Activated T-helper 1 cell treated with anti-CD3 and anti-CD28 coated beads, Interleukin-12 subunit alpha, Interleukin-12 subunit beta, Interleukin-2, Interleukin-4 antibody, amounts not matched to agents 30 ng/mL and 10 ng/mL and 1 ng/mL, durations not matched to agents 14 hours and 24 hours and 36 hours (primary cell): ENCODE measurements at regions of chr16 and their contacts with region 1.

Region 1: DNA sequence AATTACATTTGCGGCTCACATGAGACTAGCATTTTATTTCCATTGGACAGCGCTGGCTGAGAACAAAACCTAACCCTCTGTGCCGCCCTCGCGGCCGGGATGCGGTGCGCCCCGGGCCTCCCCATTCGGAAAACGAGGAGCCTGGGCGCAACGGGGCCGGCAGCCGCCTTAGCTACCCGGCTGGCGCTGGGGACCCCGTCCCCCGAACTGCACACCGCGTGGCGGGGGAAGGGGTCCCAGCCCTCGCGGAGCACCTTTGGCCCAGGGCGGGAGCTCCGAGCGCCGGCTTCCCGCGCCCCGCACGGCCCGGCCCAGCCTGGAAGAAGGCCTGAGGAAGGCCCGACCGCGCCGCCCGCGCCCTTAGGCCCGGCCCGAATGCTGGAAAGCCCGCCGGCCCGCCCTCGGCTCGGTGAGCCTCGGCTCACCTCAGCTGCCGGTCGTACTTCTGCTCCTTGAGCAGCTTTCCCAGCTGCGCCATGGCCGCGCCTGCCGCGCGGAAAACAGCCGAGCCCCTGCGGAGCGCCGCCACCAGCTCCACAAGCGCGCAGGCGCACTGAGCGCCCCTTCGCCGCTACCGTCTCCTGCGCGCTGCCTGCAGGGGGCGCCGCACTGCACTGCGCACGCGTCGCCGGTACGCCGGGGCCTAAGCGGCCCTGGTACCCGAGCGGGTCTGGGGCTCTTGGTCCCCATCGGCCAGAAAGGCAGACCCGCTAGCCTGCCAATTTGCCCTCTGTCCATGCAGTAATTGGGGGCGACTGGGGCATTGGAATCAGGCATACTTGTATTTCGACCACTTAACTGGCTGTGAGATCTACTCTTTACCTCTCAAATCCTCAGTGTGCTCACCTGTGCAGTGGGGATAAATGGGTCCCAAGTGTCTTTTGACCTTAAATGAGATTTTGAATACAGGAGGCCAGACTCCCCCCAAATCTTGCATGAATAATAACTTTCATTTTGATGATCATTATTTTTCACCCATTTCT is at the start of gene NAE1:
- DNase-seq: peak; percentile 90
- H3K4me3 Mint-ChIP-seq: peak within 1 kb of the TSS; percentile 83
- H3K27ac Mint-ChIP-seq: peak within 1 kb of the TSS; percentile 72
- H3K4me1 Mint-ChIP-seq: peaks cover 20% of the 10 kb centered on the region
- H3K27me3 Mint-ChIP-seq: peaks cover 2% of the 10 kb centered on the region
- total RNA-seq, gene NAE1: 114 and 120 TPM in 2 replicates

Region 2: GRCh38 chr16:66696669-66697630 is 133.8 kb before region 1 on chr16 and contains the start of gene CMTM4:
- intact Hi-C with region 1: loop called (anchors 1 kb)
- DNase-seq: peak; percentile 74
- H3K4me3 Mint-ChIP-seq: peak within 1 kb of the TSS; percentile 77
- H3K27ac Mint-ChIP-seq: no peak within 1 kb of the TSS
- H3K4me1 Mint-ChIP-seq: no peaks in the 10 kb centered on the region
- H3K27me3 Mint-ChIP-seq: peaks cover 38% of the 10 kb centered on the region
- total RNA-seq, gene CMTM4: 3.3 and 3.9 TPM in 2 replicates

Region 3: DNA sequence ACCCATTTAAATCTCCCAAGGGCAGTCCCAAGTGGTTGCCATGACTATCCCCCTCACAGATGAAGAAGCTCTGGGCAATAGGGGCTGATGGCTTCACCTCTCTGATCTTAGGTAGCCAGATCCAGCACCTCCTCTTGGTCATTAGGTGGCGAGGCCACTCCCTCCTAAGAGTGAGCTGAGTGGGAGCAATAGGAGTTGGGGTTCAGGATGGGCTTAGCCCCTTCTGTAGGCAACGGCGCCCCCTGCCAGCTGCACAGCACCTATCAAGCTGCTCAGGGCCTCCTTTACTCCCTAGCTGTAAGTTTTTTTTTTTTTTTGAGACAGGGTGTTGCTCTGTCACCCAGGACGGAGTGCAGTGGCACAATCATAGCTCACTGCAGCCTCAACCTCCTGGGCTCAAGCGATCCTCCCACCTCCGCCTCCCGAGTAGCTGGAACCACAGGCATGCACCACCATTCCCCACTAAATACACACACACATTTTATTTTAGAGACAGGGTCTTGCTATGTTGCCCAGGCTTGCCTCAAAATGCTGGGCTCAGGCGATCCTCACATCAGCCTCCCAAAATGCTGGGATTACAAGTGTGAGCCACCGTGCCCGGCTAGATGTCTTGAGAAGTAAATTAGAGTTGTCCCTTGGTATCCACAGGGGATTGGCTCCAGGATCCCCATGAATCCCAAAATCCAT is 98.1 kb after region 1 on chr16:
- intact Hi-C with region 1: loop called (anchors 2 kb)
- DNase-seq: no peak
- H3K4me3 Mint-ChIP-seq: no peak overlapping the region
- H3K27ac Mint-ChIP-seq: peak overlapping the region; percentile 61
- H3K4me1 Mint-ChIP-seq: peaks cover 52% of the 10 kb centered on the region
- H3K27me3 Mint-ChIP-seq: peaks cover 11% of the 10 kb centered on the region

Region 4: GRCh38 chr16:67091906-67092566 is 261.3 kb after region 1 on chr16:
- intact Hi-C with region 1: no loop called
- DNase-seq: no peak
- H3K4me3 Mint-ChIP-seq: no peak overlapping the region
- H3K27ac Mint-ChIP-seq: peak overlapping the region; percentile 92
- H3K4me1 Mint-ChIP-seq: peaks cover 17% of the 10 kb centered on the region
- H3K27me3 Mint-ChIP-seq: no peaks in the 10 kb centered on the region